ENCODE measurements at regions of chr11 and their contacts with region 1.

Region 1: DNA sequence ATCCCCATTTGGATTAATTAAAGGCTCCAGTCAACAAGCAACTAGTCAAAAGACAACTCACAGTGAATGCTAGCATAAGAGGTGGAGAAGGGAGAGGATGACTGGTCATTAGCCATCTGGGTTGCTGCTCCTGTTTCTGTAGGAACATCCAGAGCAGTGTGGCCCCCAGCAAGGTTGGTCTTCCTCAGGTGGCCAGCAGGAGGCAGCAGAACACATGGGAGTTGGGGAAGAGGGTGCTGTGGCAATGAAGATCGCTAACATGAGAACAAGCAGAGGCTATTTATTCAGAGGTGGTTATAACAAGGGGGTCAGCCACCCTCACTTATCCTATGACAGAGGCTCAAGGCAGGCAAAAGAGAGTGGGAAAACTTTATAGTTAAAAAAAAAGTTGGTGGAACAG is 21.3 kb downstream of the IZUMO1R start:
- DNase-seq: peak; percentile 40
- H3K4me3 Mint-ChIP-seq: no peak overlapping the region
- H3K27ac Mint-ChIP-seq: no peak overlapping the region
- H3K4me1 Mint-ChIP-seq: no peaks in the 10 kb centered on the region
- H3K27me3 Mint-ChIP-seq: peaks cover 9% of the 10 kb centered on the region

Region 2: DNA sequence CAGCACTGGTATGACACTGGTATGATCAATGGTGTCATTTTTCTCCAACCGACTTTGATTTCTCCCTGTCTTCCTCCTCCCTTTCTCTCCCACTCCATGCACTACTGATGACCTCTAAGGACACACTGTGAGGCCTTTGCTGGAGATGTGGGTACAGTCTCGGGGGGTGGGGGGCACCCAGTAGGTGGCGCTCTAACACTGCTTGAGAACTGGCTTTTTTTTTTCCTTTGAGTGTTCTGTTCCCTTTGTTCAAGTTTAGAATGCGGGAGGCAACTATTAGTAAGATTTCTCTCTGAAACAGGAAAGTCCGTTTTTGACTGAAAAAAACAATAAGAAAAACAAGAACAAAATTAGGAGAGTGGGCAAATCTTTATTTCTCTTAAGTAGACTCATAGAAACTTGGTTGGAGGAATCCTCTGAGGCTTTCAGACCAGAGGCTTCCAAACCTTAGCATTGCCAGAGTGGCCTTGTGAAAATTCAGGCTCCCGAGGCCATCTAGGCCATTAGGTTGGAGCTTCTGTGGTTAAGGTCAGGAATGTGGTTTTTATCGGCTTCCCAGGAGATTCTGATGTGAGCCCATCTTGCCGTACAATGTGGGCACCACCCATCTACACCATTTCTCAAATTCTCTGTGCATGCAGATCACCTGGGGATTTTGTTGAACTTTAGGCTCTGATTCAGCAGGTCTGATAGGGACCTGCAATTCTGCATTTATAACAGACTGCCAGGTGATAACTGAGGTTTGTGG is 153.8 kb before region 1 on chr11:
- intact Hi-C with region 1: loop called (anchors 5 kb)
- DNase-seq: no peak
- H3K4me3 Mint-ChIP-seq: no peak overlapping the region
- H3K27ac Mint-ChIP-seq: no peak overlapping the region
- H3K4me1 Mint-ChIP-seq: peaks cover 10% of the 10 kb centered on the region
- H3K27me3 Mint-ChIP-seq: no peaks in the 10 kb centered on the region